Activated CD8-positive, alpha-beta memory T cell treated with anti-CD3 and anti-CD28 coated beads, Interleukin-2, amount 10 ng/mL, durations not matched to agents 7 days and 5 days (primary cell): ENCODE measurements at regions of chr7 and their contacts with region 1.

Region 1: DNA sequence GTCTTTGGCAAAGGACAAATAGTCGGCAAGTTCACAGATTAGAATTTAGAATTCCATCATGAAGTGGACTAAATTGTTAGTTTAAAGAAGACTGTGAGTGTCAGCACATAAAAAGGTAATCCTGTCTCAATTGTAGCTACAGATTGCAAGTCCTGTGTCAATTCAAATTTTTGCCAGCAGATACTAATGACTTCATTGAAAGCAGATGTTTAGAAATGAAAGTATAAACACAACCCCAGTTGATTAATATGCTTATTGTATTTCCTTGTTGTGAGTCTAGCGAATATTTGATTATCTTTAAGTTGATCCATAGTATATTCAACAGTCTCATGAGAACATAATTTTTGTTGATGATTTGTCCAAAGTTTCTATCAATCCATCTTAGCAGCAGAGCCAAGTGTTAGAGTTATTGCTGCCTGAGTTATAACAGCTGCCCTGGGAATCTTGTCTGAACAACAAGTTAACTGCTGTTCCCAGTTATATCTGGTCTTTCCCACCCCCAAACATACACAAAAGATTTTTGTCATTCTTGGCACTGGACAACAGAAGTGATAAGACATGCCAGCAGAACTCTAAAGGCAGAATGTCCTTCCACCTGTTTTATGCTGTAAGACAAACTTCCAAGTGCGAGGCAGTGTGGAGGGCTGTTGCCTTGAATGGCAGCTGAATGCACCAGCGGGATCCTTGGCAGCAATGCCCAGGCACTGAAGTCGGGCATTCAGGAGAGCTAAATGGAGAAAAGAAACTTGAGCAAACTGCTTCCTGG is 21.3 kb upstream of the HERPUD2 start:
- DNase-seq: no peak
- ATAC-seq: no peak
- H3K4me3 Mint-ChIP-seq: no peak overlapping the region
- H3K27ac Mint-ChIP-seq: no peak overlapping the region
- H3K4me1 Mint-ChIP-seq: peaks cover 10% of the 10 kb centered on the region
- H3K27me3 Mint-ChIP-seq: no peaks in the 10 kb centered on the region

Region 2: DNA sequence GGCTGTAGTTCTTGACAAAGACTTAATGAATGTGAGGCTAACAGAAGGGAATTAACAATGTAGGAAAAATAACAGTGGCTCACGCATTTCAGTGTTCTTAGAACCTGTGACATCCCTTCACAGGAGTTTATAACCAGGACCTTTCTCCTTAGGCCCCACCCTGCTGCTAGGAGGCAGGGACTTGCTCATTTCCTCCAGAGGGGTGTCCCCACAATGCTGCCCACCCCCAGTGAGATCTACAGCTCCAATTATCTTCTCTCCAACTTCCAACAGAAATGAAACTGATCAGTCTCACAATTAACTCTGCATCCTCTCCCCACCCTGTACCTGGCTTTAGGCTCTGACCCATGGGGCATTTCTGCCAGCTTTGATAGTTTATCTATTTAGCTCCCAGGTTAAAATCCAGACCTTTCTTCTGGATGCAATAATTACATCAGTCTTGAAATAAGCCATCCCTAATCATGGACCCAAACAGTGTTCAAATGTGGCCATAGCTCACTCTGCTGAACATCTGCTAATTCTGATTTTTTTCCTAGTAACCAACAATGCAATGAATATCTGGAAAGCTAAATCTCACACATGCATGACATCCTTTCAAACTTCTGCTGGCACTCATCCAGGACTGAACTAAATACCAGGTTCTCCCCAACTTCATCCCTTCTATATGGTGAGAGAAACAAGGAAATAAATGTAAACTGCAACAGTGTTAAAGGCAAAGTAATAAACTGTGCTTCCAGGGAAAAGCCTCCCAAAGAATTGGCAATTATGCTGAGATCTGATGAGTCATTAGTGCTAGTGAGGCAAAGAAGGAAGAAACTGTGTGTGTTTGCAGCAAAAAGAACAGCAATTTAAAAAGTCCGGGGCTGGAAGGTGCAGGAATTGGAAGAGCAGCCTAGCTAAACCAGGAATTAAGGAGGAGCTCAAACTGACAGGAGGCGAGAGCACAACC is 85.9 kb before region 1 on chr7:
- CTCF ChIA-PET with region 1: no interaction called
- DNase-seq: no peak
- ATAC-seq: no peak
- H3K4me3 Mint-ChIP-seq: no peak overlapping the region
- H3K27ac Mint-ChIP-seq: no peak overlapping the region
- H3K4me1 Mint-ChIP-seq: no peaks in the 10 kb centered on the region
- H3K27me3 Mint-ChIP-seq: no peaks in the 10 kb centered on the region

Region 3: DNA sequence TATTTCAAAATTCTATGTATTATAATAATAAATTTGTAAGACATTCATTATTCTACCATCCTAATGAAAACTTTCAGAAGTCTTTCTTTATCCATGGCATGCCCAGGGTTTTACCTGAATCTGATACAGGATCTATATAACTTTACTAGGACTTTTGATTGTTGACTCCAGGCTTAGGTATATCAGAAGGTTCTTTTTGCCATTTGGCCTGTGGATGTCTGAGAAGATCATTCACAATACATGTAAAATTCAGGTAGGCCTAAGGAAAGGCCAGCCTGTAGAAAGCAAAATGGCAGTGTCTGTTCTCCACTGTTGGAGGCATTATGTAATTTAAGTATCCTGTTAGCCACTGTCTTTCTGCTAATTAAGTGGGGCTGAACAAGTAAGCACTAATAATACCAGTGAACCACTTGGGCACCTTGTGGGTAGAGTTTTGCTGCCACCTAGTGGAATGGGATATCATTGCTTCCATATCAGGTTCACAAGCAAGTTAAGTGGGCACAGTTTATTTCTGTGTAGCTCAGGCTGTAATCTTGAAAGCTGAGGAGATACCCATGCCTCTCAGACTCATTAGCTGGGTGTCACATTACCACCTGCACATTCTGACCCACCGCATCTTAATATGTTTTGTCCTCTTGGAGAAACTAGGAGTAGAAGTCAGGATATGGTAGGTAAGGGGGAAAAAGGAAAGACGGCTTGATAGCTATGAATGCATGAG is 190.1 kb after region 1 on chr7:
- CTCF ChIA-PET with region 1: interaction called, 14 read pairs
- DNase-seq: peak; percentile 81
- ATAC-seq: peak; percentile 89
- H3K4me3 Mint-ChIP-seq: no peak overlapping the region
- H3K27ac Mint-ChIP-seq: no peak overlapping the region
- H3K4me1 Mint-ChIP-seq: peaks cover 6% of the 10 kb centered on the region
- H3K27me3 Mint-ChIP-seq: no peaks in the 10 kb centered on the region